ENCODE measurements at regions of chr2 and their contacts with region 1.

Region 1: GRCh38 chr2:88857951-88858411 is 166.5 kb downstream of the RPIA start:
- DNase-seq: peak; percentile 83
- H3K4me3 ChIP-seq: no peak overlapping the region
- H3K27ac ChIP-seq: no peak overlapping the region
- H3K4me1 ChIP-seq: peaks cover 6% of the 10 kb centered on the region
- H3K27me3 ChIP-seq: peaks cover 1 to 10% of the 10 kb centered on the region in 2 experiments
- CTCF ChIP-seq: no peak
- POLR2A ChIP-seq: no peak

Region 2: DNA sequence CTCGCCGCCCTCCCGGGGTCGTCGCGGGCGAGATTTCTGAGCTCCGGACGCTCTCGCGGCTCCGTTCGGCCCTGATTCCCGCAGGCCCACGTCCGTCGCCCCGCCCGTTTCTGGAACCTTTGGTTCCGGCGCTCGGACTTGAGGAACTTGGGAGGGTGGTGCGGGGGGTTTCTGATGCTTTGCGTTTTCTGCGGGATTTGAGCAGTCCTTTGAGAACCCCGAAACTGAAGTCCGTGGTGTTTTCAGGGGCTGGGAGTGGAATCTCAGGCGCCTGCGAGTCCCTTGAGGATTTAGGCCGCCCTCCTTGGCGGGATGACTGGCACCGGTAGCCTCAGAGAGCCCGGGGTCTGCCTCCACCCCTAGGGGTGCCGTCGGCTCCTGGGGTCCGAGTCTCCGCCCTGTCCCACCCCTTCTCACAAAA is 687.5 kb before region 1 on chr2:
- CTCF ChIA-PET with region 1: no interaction called
- POLR2A ChIA-PET with region 1: no interaction called
- dilution Hi-C with region 1: no loop called
- intact Hi-C with region 1: no loop called
- DNase-seq: no peak
- H3K4me3 ChIP-seq: peak overlapping the region in 1 of 3 experiments; percentile 23
- H3K27ac ChIP-seq: no peak overlapping the region
- H3K4me1 ChIP-seq: no peaks in the 10 kb centered on the region
- H3K27me3 ChIP-seq: peaks cover 3 to 11% of the 10 kb centered on the region in 2 experiments
- CTCF ChIP-seq: no peak
- POLR2A ChIP-seq: no peak

Region 3: GRCh38 chr2:88845772-88846661 is 12.0 kb before region 1 on chr2:
- CTCF ChIA-PET with region 1: interaction called, 3 read pairs
- POLR2A ChIA-PET with region 1: no interaction called
- dilution Hi-C with region 1: no loop called
- intact Hi-C with region 1: loop called (anchors 1 kb)
- DNase-seq: no peak
- H3K4me3 ChIP-seq: no peak overlapping the region
- H3K27ac ChIP-seq: no peak overlapping the region
- H3K4me1 ChIP-seq: no peaks in the 10 kb centered on the region
- H3K27me3 ChIP-seq: peaks cover 5 to 19% of the 10 kb centered on the region in 2 experiments
- CTCF ChIP-seq: no peak
- POLR2A ChIP-seq: no peak

Region 4: DNA sequence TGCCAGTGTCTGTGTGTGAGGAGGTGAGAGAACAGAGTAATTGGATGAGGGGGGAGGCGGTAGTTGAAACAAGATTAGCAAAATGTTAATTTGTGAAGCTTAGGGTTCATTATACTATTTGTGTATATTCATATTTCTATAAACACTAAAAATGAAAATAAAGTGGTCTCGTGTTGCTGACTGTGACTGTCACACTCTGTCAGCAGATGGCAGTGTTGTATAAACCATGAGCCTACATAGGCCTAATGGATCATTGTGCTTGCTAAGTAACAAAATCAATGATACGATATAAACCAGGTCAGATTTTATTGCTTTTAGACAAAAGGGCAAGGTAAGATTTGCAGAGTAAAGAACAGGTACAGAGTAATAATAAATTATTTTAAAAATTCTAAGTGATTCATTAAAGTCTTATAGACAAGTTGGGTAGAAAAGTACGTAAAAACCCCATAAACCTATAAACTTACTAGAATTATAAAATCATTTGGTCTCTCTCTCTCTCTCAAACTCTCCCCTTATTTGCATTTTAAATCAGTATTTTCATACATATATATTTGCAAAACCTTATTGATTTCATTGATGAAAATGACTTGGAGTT is 16.2 kb after region 1 on chr2:
- CTCF ChIA-PET with region 1: interaction called, 50 read pairs
- POLR2A ChIA-PET with region 1: no interaction called
- dilution Hi-C with region 1: no loop called
- intact Hi-C with region 1: no loop called
- DNase-seq: peak; percentile 77
- H3K4me3 ChIP-seq: peak overlapping the region in 1 of 3 experiments; percentile 45
- H3K27ac ChIP-seq: no peak overlapping the region
- H3K4me1 ChIP-seq: no peaks in the 10 kb centered on the region
- H3K27me3 ChIP-seq: peaks cover 10 to 32% of the 10 kb centered on the region in 2 experiments
- CTCF ChIP-seq: peak; percentile 57 to 62
- POLR2A ChIP-seq: no peak